ENCODE measurements at regions of chr5 and their contacts with region 1.

Region 1: GRCh38 chr5:140244525-140245025 is 58.3 kb downstream of the PFDN1 start:
- DNase-seq: peak; percentile 76 to 91
- ATAC-seq: peak; percentile 27 to 44
- H3K4me3 ChIP-seq: no peak overlapping the region
- H3K27ac ChIP-seq: peak overlapping the region; percentile 87 to 93 (median 92)
- H3K4me1 ChIP-seq: peaks cover 77 to 86% of the 10 kb centered on the region in 2 donors
- H3K27me3 ChIP-seq: no peaks in the 10 kb centered on the region
- CTCF ChIP-seq: peak; percentile 93 to 97 (median 95)
- POLR2A ChIP-seq: no peak

Region 2: GRCh38 chr5:140169410-140169809 is 75.2 kb before region 1 on chr5:
- in situ Hi-C with region 1: no loop called
- intact Hi-C with region 1: no loop called
- DNase-seq: no peak
- ATAC-seq: no peak
- H3K4me3 ChIP-seq: no peak overlapping the region
- H3K27ac ChIP-seq: no peak overlapping the region
- H3K4me1 ChIP-seq: peaks cover 3% of the 10 kb centered on the region in 2 donors
- H3K27me3 ChIP-seq: no peaks in the 10 kb centered on the region
- CTCF ChIP-seq: peak in 1 of 5 experiments; percentile 30
- POLR2A ChIP-seq: no peak

Region 3: GRCh38 chr5:140189977-140190871 is 54.4 kb before region 1 on chr5:
- in situ Hi-C with region 1: no loop called
- intact Hi-C with region 1: loop called (anchors 2 kb)
- DNase-seq: peak in 1 of 2 donors; percentile 45
- ATAC-seq: peak; percentile 96 to 98
- H3K4me3 ChIP-seq: no peak overlapping the region
- H3K27ac ChIP-seq: peak overlapping the region; percentile 97 to 99 (median 98)
- H3K4me1 ChIP-seq: peaks cover 68 to 77% of the 10 kb centered on the region in 2 donors
- H3K27me3 ChIP-seq: no peaks in the 10 kb centered on the region
- CTCF ChIP-seq: no peak
- POLR2A ChIP-seq: peak in 1 of 2 donors; percentile 55

Region 4: GRCh38 chr5:140293091-140293848 is 48.7 kb after region 1 on chr5:
- in situ Hi-C with region 1: no loop called
- intact Hi-C with region 1: loop called (anchors 2 kb)
- DNase-seq: no peak
- ATAC-seq: no peak
- H3K4me3 ChIP-seq: no peak overlapping the region
- H3K27ac ChIP-seq: peak overlapping the region; percentile 77 to 88 (median 80)
- H3K4me1 ChIP-seq: peaks cover 80 to 87% of the 10 kb centered on the region in 2 donors
- H3K27me3 ChIP-seq: no peaks in the 10 kb centered on the region
- CTCF ChIP-seq: no peak
- POLR2A ChIP-seq: no peak

Region 5: GRCh38 chr5:140351609-140352334 is 107.2 kb after region 1 on chr5:
- in situ Hi-C with region 1: loop called (anchors 5 kb)
- intact Hi-C with region 1: loop called (anchors 1 kb)
- DNase-seq: no peak
- ATAC-seq: peak in 1 of 2 donors; percentile 39
- H3K4me3 ChIP-seq: no peak overlapping the region
- H3K27ac ChIP-seq: no peak overlapping the region
- H3K4me1 ChIP-seq: peaks cover 14 to 21% of the 10 kb centered on the region in 2 donors
- H3K27me3 ChIP-seq: no peaks in the 10 kb centered on the region
- CTCF ChIP-seq: peak; percentile 82 to 94 (median 86)
- POLR2A ChIP-seq: no peak

Region 6: DNA sequence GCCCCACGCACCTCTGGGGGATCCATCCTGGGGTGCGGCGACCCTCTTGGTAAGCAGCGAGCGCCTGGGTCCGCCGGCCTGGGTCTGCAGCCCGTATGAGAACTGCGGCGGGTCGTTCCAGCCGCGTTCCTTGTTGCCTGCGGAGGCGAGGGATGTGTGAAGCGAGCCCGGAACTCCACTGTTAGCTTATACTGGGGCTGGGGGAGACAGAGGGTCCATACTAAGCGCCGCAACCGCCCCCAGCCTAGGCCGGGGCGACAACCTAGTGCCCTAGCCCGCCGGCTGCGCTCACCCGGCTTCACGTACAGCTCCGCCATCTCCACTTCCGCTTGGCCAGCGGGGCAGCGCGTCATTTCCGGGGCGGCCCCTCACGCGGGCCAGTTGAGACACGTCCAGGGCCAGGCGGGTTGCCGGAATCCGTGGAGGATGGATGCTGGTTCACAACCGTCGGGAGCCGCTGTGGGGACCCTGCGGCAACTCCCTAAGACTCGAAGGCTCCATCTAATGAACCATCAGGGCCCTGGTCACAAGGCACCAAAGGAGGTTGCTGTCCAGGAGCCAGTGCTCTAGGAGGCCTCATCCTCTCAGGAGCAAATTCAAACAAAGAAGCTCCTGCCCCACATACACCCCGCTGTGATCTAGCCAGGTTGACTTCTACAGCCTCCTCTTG is 312.7 kb after region 1 on chr5 and contains the start of gene SRA1:
- in situ Hi-C with region 1: loop called in 1 of 4 experiments (anchors 25 kb)
- intact Hi-C with region 1: loop called (anchors 10 kb)
- DNase-seq: peak; percentile 83 to 87
- ATAC-seq: peak; percentile 88 to 90
- H3K4me3 ChIP-seq: peak within 1 kb of the TSS; percentile 54 to 99 (median 80)
- H3K27ac ChIP-seq: peak within 1 kb of the TSS; percentile 88 to 97 (median 92)
- H3K4me1 ChIP-seq: peaks cover 37 to 39% of the 10 kb centered on the region in 2 donors
- H3K27me3 ChIP-seq: no peaks in the 10 kb centered on the region
- CTCF ChIP-seq: no peak
- POLR2A ChIP-seq: peak; percentile 94 to 97
- total RNA-seq, gene SRA1: 34.1 to 67.3 (median 40.6) TPM

Measured in gastrocnemius medialis (tissue), 4 donors.